ENCODE measurements at regions of chr16 and their contacts with region 1.

Region 1: GRCh38 chr16:68512183-68512582 is 26.9 kb upstream of the ZFP90 start:
- DNase-seq: no peak
- ATAC-seq: no peak

Region 2: DNA sequence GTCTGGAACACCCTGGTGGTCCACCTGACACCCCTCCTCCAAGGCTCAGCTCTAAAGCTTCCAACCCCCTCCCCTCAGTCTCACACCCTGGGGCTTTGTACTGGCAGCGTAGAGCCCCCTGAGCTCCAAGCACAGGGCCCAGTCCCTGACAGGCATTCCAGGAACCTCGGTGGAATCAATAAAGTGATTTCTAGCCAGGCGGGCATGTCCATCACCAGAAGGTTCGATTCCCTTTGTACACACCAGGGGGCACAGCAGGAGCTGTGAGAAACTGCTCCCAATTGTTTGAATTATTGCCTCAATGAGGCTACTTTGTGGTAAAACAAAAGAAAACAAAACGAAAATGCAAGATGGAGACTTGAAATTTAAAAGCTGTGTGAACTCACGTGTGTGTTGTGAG is 115.7 kb before region 1 on chr16:
- intact Hi-C with region 1: loop called (anchors 5 kb)
- DNase-seq: peak; percentile 30
- ATAC-seq: no peak

Measured in Right ventricle myocardium inferior (tissue), 1 donor.